ENCODE measurements at regions of chr12 and their contacts with region 1.

Region 1: GRCh38 chr12:130775953-130776856 is 60.1 kb upstream of the RIMBP2 start:
- DNase-seq: peak; percentile 97
- ATAC-seq: peak; percentile 96
- H3K4me3 ChIP-seq: peak overlapping the region; percentile 49 to 76 (median 63)
- H3K27ac ChIP-seq: peak overlapping the region; percentile 90
- H3K4me1 ChIP-seq: peaks cover 23% of the 10 kb centered on the region
- H3K27me3 ChIP-seq: no peaks in the 10 kb centered on the region; a peak in 1 of 5 replicates
- CTCF ChIP-seq: 0 out of 2 replicates have a peak, but pooled peaks have one; percentile 10
- EP300 ChIP-seq: peak; percentile 13 to 64; a peak in 2 of 4 replicates
- POLR2A ChIP-seq: peak; percentile 32 to 83; a peak in 3 of 4 replicates
- RAD21 ChIP-seq: peak; percentile 17; the same call in 1 of the 2 replicates

Region 2: GRCh38 chr12:130761537-130762318 is 14.5 kb before region 1 on chr12:
- CTCF ChIA-PET with region 1: interaction called, 4 read pairs
- POLR2A ChIA-PET with region 1: interaction called, 9 read pairs
- in situ Hi-C with region 1: no loop called
- intact Hi-C with region 1: loop called (anchors 1 kb)
- DNase-seq: peak; percentile 54
- ATAC-seq: peak; percentile 92
- H3K4me3 ChIP-seq: peak overlapping the region in 1 of 3 experiments; percentile 57; a peak in 2 of 6 replicates
- H3K27ac ChIP-seq: no peak overlapping the region
- H3K4me1 ChIP-seq: peaks cover 7% of the 10 kb centered on the region
- H3K27me3 ChIP-seq: peaks cover 3 to 15% of the 10 kb centered on the region in 2 experiments; a peak in 4 of 5 replicates
- CTCF ChIP-seq: peak; percentile 97
- EP300 ChIP-seq: no peak
- POLR2A ChIP-seq: no peak
- RAD21 ChIP-seq: peak; percentile 94

Region 3: DNA sequence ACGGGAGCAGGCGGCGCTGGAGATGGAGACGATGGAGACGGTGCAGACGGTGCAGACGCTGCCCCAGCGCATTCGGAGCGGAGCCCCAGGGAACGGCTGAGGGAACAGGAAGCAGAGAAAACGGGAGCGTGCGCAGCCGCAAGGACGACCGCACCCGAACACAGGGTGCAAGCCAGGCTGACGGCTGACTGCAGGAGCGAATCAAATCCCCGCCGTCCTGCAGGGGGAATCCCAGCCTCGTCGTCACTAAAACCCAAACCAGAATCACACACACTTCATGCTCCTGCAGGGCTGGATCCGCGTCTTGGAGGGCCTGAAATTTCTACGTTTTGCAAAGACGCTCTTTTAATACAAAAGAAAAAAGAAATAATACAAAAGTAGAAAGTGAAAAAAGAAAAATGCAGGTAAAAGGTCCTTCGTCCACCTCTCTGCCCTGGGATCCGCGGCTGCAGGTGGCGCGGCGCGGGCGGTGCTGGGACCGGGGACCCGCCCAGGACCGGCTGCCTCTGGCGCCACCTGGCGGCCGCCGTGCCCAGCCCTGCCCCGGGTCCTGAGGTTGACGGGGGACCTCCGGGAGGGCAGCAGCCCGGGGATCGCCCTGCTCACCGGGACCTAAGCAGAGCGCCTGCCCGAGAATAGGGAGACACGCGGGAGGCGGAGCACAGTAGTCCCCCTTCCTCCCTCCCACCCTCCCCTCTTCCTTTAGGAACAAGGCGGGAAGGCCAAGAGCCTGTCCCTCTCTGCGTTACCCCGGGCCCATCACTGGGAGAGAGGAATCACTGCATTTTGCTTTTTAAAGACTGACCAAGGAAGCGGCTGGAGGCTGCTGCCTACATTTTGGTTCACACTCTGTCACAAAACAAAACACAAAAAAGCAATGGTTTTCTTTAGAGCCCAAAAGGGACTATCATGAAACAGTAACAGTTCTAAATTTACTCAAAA is 42.7 kb after region 1 on chr12:
- CTCF ChIA-PET with region 1: no interaction called
- POLR2A ChIA-PET with region 1: interaction called, 5 read pairs
- in situ Hi-C with region 1: no loop called
- intact Hi-C with region 1: loop called (anchors 5 kb)
- DNase-seq: no peak
- ATAC-seq: peak; percentile 100
- H3K4me3 ChIP-seq: no peak overlapping the region
- H3K27ac ChIP-seq: no peak overlapping the region
- H3K4me1 ChIP-seq: no peaks in the 10 kb centered on the region
- H3K27me3 ChIP-seq: no peaks in the 10 kb centered on the region
- CTCF ChIP-seq: peak; percentile 83
- EP300 ChIP-seq: no peak
- POLR2A ChIP-seq: no peak
- RAD21 ChIP-seq: peak; percentile 94

Region 4: DNA sequence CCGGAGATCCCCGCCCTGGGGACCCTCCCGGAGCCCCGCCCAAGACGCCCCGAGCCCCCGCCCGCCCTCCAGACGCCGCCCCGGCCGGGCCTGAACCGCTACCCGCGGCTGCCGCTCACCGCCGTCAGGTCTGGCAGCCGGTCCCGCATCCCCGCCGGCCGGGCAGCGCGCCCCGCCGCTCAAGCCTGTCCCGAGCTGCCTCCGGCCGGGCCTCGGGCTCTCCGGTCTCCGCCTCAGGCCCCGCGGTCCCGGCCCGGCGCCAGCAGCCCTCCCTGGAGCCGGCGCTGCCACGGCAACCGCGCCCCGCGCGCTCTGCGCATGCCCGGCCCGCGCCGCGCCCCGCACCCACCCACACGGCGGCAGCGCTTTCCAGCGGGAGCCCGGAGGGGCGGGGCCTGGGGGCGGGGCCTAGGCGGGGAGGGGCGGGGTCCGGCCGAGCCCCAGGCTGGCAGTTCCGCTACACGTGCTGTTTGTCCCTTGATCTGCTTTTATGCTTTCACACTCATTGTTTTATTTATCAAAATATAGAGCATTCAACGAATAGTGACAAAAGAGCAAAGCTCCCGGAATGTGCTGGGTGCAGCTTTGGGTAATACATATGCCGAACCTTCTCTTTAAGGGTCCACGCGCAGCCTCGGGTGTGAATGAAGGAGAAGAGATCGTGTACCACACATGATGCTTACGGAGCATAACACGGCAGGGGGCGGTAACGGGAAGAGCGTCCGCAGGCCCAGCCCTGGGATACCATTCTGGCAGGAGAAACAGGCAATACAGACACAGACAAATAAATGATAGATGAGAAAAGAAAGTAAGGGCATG is 63.0 kb after region 1 on chr12 and contains the start of gene STX2:
- CTCF ChIA-PET with region 1: no interaction called
- POLR2A ChIA-PET with region 1: interaction called, 12 read pairs
- in situ Hi-C with region 1: no loop called
- intact Hi-C with region 1: no loop called
- DNase-seq: peak; percentile 80
- ATAC-seq: peak; percentile 83
- H3K4me3 ChIP-seq: peak within 1 kb of the TSS; percentile 75 to 93 (median 86)
- H3K27ac ChIP-seq: peak within 1 kb of the TSS; percentile 59
- H3K4me1 ChIP-seq: peaks cover 26% of the 10 kb centered on the region
- H3K27me3 ChIP-seq: no peaks in the 10 kb centered on the region
- CTCF ChIP-seq: peak; percentile 81
- EP300 ChIP-seq: peak in 1 of 2 experiments; percentile 34; a peak in 1 of 4 replicates
- POLR2A ChIP-seq: peak in 1 of 2 experiments; percentile 43; a peak in 1 of 4 replicates
- RAD21 ChIP-seq: peak; percentile 29; the same call in 1 of the 2 replicates
- total RNA-seq, gene STX2: 12.4 and 13.4 TPM in 2 replicates

Region 5: GRCh38 chr12:130871286-130872178 is 95.3 kb after region 1 on chr12 and contains the start of gene RAN:
- CTCF ChIA-PET with region 1: no interaction called
- POLR2A ChIA-PET with region 1: interaction called, 17 read pairs
- in situ Hi-C with region 1: no loop called
- intact Hi-C with region 1: no loop called
- DNase-seq: peak; percentile 78
- ATAC-seq: peak; percentile 82
- H3K4me3 ChIP-seq: peak within 1 kb of the TSS; percentile 76 to 82 (median 78)
- H3K27ac ChIP-seq: peak within 1 kb of the TSS; percentile 93
- H3K4me1 ChIP-seq: peaks cover 71% of the 10 kb centered on the region
- H3K27me3 ChIP-seq: no peaks in the 10 kb centered on the region; a peak in 1 of 5 replicates
- CTCF ChIP-seq: no peak; the same call in 1 of the 2 replicates
- EP300 ChIP-seq: no peak
- POLR2A ChIP-seq: peak; percentile 62 to 75
- RAD21 ChIP-seq: peak; percentile 33; the same call in 1 of the 2 replicates
- total RNA-seq, gene RAN: 1,630 and 2,526 TPM in 2 replicates

Region 6: GRCh38 chr12:130970165-130970907 is 194.1 kb after region 1 on chr12:
- CTCF ChIA-PET with region 1: no interaction called
- POLR2A ChIA-PET with region 1: no interaction called
- in situ Hi-C with region 1: no loop called
- intact Hi-C with region 1: no loop called
- DNase-seq: no peak
- ATAC-seq: peak; percentile 45
- H3K4me3 ChIP-seq: peak overlapping the region in 1 of 3 experiments; percentile 18; a peak in 1 of 6 replicates
- H3K27ac ChIP-seq: peak overlapping the region; percentile 47
- H3K4me1 ChIP-seq: peaks cover 65% of the 10 kb centered on the region
- H3K27me3 ChIP-seq: no peaks in the 10 kb centered on the region
- CTCF ChIP-seq: no peak
- EP300 ChIP-seq: no peak
- POLR2A ChIP-seq: no peak
- RAD21 ChIP-seq: no peak

Region 7: DNA sequence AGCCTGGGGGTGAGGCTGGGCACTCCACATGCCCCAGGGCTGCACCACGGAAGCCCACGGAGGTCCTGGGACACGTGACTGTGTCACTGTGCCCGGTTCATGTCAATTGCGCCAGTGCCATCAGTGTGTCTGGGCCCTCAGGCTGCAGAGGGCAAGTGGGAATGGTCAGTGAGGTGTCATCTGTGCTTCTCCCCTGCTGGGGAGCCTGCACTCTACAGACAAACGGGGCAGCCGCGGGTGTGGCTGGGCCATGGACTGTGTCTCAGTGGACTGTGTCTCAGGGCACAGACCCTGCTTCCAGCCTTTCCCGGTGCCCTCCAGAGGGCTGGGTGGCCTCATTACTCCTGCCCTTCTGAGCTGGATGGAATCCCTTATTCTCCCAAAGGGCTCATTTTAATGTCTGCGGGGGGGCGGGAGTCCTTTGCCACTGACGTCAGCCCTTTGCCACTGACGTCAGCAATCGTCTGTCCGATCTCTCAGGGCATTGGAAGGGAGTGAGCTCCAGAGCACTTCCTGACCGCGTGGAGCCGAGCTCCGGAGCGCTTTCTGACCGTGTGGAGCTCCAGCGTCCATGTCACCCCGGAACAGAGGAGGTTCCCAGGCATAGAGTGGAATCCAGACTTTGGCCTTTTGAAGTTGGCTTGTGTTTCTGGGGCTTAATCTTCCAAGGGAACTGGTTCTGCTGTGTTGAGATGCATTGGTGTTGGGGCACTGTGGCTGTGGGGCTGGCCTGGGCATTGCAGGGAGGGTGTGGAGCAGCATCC is 249.9 kb after region 1 on chr12:
- CTCF ChIA-PET with region 1: no interaction called
- POLR2A ChIA-PET with region 1: no interaction called
- in situ Hi-C with region 1: no loop called
- intact Hi-C with region 1: no loop called
- DNase-seq: no peak
- ATAC-seq: peak; percentile 29; the same call in 2 of the 3 replicates
- H3K4me3 ChIP-seq: no peak overlapping the region
- H3K27ac ChIP-seq: no peak overlapping the region
- H3K4me1 ChIP-seq: peaks cover 30% of the 10 kb centered on the region
- H3K27me3 ChIP-seq: no peaks in the 10 kb centered on the region
- CTCF ChIP-seq: no peak
- EP300 ChIP-seq: no peak
- POLR2A ChIP-seq: no peak
- RAD21 ChIP-seq: no peak